IMR-90 (cell line): ENCODE measurements at regions of chr7 and their contacts with region 1.

Region 1: GRCh38 chr7:139502226-139502625 is 18.8 kb upstream of the KLRG2 start:
- DNase-seq: no peak
- ATAC-seq: no peak
- H3K4me3 ChIP-seq: no peak overlapping the region
- H3K27ac ChIP-seq: no peak overlapping the region
- H3K4me1 ChIP-seq: no peaks in the 10 kb centered on the region
- H3K27me3 ChIP-seq: peaks cover 19% of the 10 kb centered on the region
- CTCF ChIP-seq: no peak
- POLR2A ChIP-seq: no peak
- RAD21 ChIP-seq: no peak

Region 2: DNA sequence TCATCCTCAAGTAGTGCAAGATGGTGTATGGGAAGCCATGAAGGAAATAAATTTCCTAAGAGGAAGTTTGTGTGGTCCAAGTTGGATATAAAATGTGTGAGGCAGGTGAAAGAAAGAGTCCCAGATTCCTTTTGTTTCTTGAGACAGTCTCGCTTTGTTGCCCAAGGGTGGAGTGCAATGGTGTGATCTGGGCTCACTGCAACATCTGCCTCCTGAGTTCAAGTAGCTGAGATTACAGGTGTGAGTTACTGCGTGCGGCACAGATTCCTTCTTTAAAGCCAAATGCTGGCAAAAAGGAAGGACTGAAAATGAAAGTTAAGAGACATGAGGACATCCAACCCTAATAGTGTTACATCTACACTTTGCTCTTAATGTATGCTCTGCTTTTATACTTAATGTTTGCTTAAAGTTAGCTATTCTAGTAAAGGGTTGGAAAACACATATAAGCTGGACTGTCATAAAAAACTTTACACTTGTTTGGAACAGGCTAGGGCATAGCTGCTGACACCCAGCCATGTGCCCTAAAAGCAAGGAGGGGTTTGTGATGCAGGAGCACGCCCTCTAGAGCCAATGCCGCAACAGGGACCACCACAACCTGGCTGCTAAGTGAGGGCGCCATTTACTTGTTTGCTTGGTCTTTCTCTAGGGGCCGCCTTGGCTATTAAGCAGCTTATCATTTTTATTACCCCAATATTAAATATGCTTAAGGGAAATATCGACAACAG is 55.8 kb after region 1 on chr7:
- CTCF ChIA-PET with region 1: no interaction called
- POLR2A ChIA-PET with region 1: no interaction called
- dilution Hi-C with region 1: no loop called
- in situ Hi-C with region 1: no loop called
- intact Hi-C with region 1: loop called (anchors 5 kb)
- DNase-seq: no peak
- ATAC-seq: no peak
- H3K4me3 ChIP-seq: no peak overlapping the region
- H3K27ac ChIP-seq: no peak overlapping the region
- H3K4me1 ChIP-seq: no peaks in the 10 kb centered on the region
- H3K27me3 ChIP-seq: peaks cover 13% of the 10 kb centered on the region; the same call in 1 of the 2 replicates
- CTCF ChIP-seq: 0 out of 2 replicates have a peak, but pooled peaks have one; percentile 3
- POLR2A ChIP-seq: no peak
- RAD21 ChIP-seq: no peak

Region 3: GRCh38 chr7:139570119-139570518 is 67.9 kb after region 1 on chr7:
- CTCF ChIA-PET with region 1: no interaction called
- POLR2A ChIA-PET with region 1: no interaction called
- dilution Hi-C with region 1: no loop called
- in situ Hi-C with region 1: no loop called
- intact Hi-C with region 1: loop called (anchors 5 kb)
- DNase-seq: no peak
- ATAC-seq: no peak
- H3K4me3 ChIP-seq: no peak overlapping the region
- H3K27ac ChIP-seq: no peak overlapping the region
- H3K4me1 ChIP-seq: peaks cover 2% of the 10 kb centered on the region; the same call in 1 of the 2 replicates
- H3K27me3 ChIP-seq: no peaks in the 10 kb centered on the region
- CTCF ChIP-seq: 0 out of 2 replicates have a peak, but pooled peaks have one; percentile 8
- POLR2A ChIP-seq: no peak
- RAD21 ChIP-seq: no peak